Dorsolateral prefrontal cortex (tissue), 120 donors: ENCODE measurements at regions of chr1 and their contacts with region 1.

Region 1: DNA sequence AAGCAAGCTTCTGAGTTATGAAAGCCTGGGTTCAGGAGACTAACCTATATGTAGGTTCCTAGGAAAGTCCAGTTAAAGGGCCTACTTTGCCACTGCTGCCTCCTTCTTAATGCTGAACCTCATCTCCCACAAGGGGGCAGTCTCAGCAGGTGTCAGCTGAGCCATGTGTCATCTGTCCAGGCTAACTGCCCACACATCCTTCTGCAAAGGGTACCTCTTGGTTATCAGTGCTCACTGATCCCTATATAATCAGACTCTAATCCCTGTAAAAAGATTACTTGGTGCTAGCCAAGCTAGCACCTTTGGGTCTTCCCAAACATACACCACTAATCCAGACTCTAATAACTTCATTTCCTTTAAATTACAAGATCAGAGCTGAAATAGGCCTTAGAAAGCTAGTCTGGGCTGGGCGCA is 9.0 kb downstream of the PRDX1 start:
- DNase-seq: peak in 5 of 10 donors; percentile 45 to 70 (median 49)
- H3K4me3 ChIP-seq: no peak overlapping the region
- H3K27ac ChIP-seq: peak overlapping the region in 47 of 59 donors; percentile 19 to 90 (median 79)
- H3K27me3 ChIP-seq: no peaks in the 10 kb centered on the region
- CTCF ChIP-seq: peak; percentile 36 to 81 (median 68)

Region 2: GRCh38 chr1:45876000-45876617 is 363.5 kb after region 1 on chr1:
- intact Hi-C with region 1: loop called in 1 of 2 experiments (anchors 10 kb)
- DNase-seq: no peak
- H3K4me3 ChIP-seq: no peak overlapping the region
- H3K27ac ChIP-seq: no peak overlapping the region
- H3K27me3 ChIP-seq: no peaks in the 10 kb centered on the region
- CTCF ChIP-seq: no peak